WTC11 (cell line): ENCODE measurements at regions of chr3 and their contacts with region 1.

Region 1: GRCh38 chr3:189961525-189962161 is 159.1 kb downstream of the P3H2 start:
- DNase-seq: peak; percentile 85
- ATAC-seq: peak; percentile 58
- H3K4me3 Mint-ChIP-seq: no peak overlapping the region
- H3K27ac Mint-ChIP-seq: peak overlapping the region; percentile 64
- H3K4me1 Mint-ChIP-seq: peaks cover 23% of the 10 kb centered on the region
- H3K27me3 Mint-ChIP-seq: no peaks in the 10 kb centered on the region
- CTCF ChIP-seq: peak; percentile 89

Region 2: GRCh38 chr3:189883113-189883753 is 78.4 kb before region 1 on chr3:
- CTCF ChIA-PET with region 1: no interaction called
- POLR2A ChIA-PET with region 1: no interaction called
- DNase-seq: no peak
- ATAC-seq: no peak
- H3K4me3 Mint-ChIP-seq: no peak overlapping the region
- H3K27ac Mint-ChIP-seq: no peak overlapping the region
- H3K4me1 Mint-ChIP-seq: peaks cover 26% of the 10 kb centered on the region
- H3K27me3 Mint-ChIP-seq: no peaks in the 10 kb centered on the region
- CTCF ChIP-seq: no peak

Region 3: GRCh38 chr3:190012314-190012782 is 50.7 kb after region 1 on chr3:
- CTCF ChIA-PET with region 1: interaction called, 12 read pairs
- POLR2A ChIA-PET with region 1: no interaction called
- DNase-seq: no peak
- ATAC-seq: peak; percentile 59
- H3K4me3 Mint-ChIP-seq: peak overlapping the region; percentile 0; the same call in 1 of the 2 replicates
- H3K27ac Mint-ChIP-seq: peak overlapping the region; percentile 79
- H3K4me1 Mint-ChIP-seq: peaks cover 74% of the 10 kb centered on the region
- H3K27me3 Mint-ChIP-seq: no peaks in the 10 kb centered on the region
- CTCF ChIP-seq: no peak

Region 4: DNA sequence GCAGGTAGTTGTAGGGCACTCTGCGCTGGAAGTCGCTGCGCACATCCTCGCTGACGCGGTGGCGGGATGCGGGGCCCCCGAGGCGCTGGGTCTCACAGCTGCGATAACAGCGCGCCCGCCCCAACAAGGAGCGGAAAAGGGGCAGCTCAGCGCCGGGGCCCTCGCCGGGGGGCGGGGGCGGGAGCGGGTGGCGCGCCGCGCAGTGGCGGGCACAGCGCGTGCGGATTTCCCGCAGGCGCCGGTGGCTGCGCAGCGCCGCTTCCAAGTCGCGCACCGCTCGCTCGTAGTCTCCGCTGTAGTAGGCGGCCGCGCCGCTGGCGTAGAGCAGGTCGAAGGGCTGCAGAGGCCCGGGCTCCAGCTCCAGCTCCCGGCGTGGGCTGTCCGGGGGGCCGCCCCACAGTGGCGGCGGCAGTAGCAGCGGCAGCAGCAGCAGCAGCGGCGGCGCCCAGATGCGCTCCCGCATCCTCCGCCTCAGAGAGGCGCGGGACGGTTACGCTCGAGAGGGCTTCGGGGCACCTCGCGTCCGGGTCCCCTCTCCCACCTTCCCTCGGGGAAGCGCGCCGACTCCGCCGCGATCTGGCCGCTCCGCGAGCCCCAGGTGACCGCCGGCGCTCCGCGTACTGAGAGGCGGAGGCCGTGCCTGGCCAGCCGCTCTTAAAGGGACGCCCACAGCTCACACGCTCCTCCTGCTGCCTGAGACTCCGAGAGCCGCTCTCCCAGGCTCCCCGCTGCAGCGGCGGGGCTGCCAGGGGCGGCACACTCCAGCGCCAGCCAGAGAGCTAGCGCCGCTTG is 158.8 kb after region 1 on chr3 and contains the start of gene P3H2:
- CTCF ChIA-PET with region 1: interaction called, 17 read pairs
- POLR2A ChIA-PET with region 1: interaction called, 3 read pairs
- DNase-seq: peak; percentile 84
- ATAC-seq: peak; percentile 97
- H3K4me3 Mint-ChIP-seq: peak within 1 kb of the TSS; percentile 85
- H3K27ac Mint-ChIP-seq: no peak within 1 kb of the TSS; the same call in 1 of the 2 replicates
- H3K4me1 Mint-ChIP-seq: peaks cover 61% of the 10 kb centered on the region
- H3K27me3 Mint-ChIP-seq: peaks cover 26% of the 10 kb centered on the region
- CTCF ChIP-seq: no peak
- total RNA-seq, gene P3H2: 29.4 to 39.9 TPM (median 36.2 TPM) in 3 replicates

Region 5: DNA sequence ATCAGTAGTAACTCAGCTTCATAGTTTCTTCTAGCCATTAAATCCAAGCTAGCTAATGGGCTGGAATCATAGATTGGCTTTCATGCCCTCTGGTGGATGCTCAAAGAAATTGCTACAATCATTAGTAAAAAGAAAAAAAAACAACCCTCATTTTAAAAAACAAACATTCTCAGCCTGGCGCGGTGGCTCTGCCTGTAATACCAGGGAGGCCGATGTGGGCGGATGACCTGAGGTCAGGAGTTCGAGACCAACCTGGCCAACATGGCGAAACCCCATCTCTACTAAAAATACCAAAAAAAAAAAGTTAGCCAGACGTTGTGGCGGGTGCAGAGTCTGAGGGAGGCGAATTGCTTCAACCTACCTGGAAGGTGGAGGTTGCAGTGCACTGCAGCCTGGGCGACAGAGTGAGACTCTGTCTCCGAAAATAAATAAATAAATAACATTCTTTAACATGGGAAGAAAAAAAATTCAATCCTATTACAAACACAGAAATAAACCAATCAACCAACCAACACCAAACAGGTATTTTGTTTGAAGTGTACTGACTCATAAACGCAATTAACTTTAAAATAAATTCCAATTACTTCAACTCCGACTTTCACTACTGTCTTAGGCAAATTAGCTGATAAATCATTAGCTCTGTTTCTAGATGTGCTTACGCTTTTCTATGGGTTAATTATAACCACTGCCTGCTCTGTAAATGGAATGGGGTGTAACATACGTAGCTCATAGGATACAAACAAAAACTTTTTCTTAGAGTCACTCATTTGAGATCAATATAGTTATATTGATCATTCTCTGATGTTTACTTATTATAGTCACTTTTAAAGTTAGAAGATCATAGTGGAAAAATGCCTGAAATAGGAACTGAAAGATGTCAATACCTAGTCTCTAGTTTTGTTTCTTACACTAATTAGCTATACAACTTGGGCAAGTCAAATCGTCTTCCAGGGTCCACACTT is 463.1 kb after region 1 on chr3:
- CTCF ChIA-PET with region 1: interaction called, 17 read pairs
- POLR2A ChIA-PET with region 1: no interaction called
- DNase-seq: peak; percentile 78
- ATAC-seq: peak; percentile 96
- H3K4me3 Mint-ChIP-seq: peak overlapping the region; percentile 7; the same call in 1 of the 2 replicates
- H3K27ac Mint-ChIP-seq: 0 out of 2 replicates have a peak overlapping the region, but pooled peaks have one; percentile 50
- H3K4me1 Mint-ChIP-seq: no peaks in the 10 kb centered on the region
- H3K27me3 Mint-ChIP-seq: no peaks in the 10 kb centered on the region
- CTCF ChIP-seq: peak; percentile 58; the same call in 1 of the 2 replicates